Activated CD4-positive, alpha-beta memory T cell treated with anti-CD3 and anti-CD28 coated beads for 36 hours (primary cell): ENCODE measurements at regions of chr1 and their contacts with region 1.

Region 1: DNA sequence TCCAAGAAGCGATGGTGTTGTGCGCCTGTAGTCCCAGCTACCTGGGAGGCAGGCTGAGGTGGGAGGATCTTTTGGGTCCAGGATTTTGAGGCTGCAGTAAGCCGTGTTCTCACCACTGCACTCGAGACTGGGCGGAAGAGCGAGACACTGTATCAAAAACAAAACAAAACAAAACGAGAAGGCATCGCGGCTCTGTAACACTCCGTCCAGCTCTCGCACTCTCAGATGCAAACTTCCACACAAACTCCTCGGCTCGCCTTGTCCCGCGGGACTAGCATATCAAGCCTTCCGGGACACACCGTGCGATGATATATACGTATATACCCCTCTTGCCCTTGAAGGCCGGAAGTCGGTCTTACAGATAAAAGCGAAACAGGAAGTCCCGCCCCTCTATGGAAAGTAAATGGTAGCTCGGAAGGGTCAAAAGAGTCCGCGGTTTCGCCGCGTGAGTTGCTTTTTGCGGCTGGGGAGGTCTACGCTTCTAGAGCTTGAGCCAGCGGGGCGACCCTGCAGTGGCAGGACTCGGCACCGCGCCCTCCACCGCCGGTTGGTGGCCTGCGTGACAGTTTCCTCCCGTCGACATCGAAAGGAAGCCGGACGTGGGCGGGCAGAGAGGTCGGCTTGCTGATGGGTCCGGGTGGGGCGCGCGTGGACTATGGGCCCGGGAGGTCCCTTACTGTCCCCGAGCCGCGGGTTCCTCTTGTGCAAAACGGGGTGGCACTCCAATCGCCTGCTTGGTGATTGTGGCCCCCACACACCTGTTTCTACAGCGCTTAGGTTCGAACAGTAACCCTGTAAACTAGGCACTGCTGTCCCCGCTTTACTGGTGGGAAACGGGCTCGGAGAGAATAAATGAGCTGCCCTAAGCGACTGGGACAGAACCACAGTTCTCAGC is at the start of gene COA6:
- DNase-seq: peak; percentile 92
- H3K4me3 Mint-ChIP-seq: peak within 1 kb of the TSS; percentile 97
- H3K27ac Mint-ChIP-seq: peak within 1 kb of the TSS; percentile 100
- H3K4me1 Mint-ChIP-seq: peaks cover 60% of the 10 kb centered on the region
- H3K27me3 Mint-ChIP-seq: no peaks in the 10 kb centered on the region
- total RNA-seq, gene COA6: 57.7 to 58.5 TPM

Region 2: DNA sequence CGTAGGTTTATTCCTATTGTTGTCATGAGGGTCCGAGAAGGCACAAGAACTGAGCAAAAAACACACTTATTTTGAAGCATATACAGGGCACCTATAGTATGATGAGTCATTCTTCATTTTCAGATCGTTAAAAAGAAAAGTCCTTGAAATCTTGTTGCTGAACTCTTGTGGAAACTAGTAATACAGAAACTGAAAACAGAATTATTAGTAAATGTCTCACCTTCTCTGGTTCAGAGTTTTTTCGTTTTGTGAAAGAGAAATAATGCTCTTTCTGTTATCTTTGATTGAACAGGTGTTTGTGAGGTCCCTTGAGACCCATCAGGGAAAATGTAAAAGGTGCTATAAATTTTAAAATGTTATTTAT is 102.1 kb before region 1 on chr1:
- CTCF ChIA-PET with region 1: interaction called, 3 read pairs
- POLR2A ChIA-PET with region 1: no interaction called
- intact Hi-C with region 1: loop called (anchors 2 kb)
- DNase-seq: no peak
- H3K4me3 Mint-ChIP-seq: no peak overlapping the region
- H3K27ac Mint-ChIP-seq: no peak overlapping the region
- H3K4me1 Mint-ChIP-seq: peaks cover 32% of the 10 kb centered on the region
- H3K27me3 Mint-ChIP-seq: peaks cover 30% of the 10 kb centered on the region

Region 3: DNA sequence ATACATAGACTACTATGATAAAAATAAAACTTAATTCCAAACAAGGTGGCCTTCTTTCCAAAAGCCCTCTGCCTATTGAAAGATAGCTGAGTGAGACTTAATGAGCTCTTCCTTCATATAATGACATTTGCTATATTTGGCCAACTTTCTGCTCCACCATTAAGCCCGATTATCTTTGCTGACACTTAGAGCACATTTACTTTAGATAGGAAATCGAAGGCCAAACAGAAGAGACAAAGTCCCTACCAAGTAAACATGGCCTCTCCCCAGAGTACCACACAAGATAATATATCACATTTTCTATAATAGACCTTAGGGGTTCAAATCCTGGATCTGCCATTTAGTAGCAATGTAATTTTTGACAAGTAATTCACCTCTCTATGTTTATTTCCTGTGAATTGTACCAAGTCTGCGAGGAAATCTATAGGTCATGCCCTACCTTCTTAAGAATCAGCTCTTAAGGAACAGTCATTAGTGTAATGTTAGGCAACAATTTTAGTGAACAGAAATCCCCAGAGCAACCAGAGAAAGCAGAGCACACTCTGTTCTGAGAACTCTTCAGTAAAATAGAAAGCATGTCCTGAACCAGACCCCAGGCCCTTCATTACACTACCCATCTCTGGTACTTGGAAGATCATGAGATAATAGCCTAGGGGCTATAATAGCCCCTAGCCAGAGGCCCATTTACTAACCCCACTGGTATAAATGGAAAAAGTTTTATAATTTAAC is 17.4 kb before region 1 on chr1:
- CTCF ChIA-PET with region 1: no interaction called
- POLR2A ChIA-PET with region 1: interaction called, 6 read pairs
- intact Hi-C with region 1: loop called (anchors 2 kb)
- DNase-seq: no peak
- H3K4me3 Mint-ChIP-seq: peak overlapping the region; percentile 77
- H3K27ac Mint-ChIP-seq: peak overlapping the region; percentile 80
- H3K4me1 Mint-ChIP-seq: peaks cover 15% of the 10 kb centered on the region
- H3K27me3 Mint-ChIP-seq: no peaks in the 10 kb centered on the region

Region 4: GRCh38 chr1:234409328-234409727 is 36.0 kb after region 1 on chr1:
- CTCF ChIA-PET with region 1: interaction called, 13 read pairs
- POLR2A ChIA-PET with region 1: interaction called, 10 read pairs
- intact Hi-C with region 1: loop called (anchors 1 kb)
- DNase-seq: peak; percentile 29
- H3K4me3 Mint-ChIP-seq: peak overlapping the region; percentile 45
- H3K27ac Mint-ChIP-seq: peak overlapping the region; percentile 84
- H3K4me1 Mint-ChIP-seq: peaks cover 32% of the 10 kb centered on the region
- H3K27me3 Mint-ChIP-seq: no peaks in the 10 kb centered on the region

Region 5: DNA sequence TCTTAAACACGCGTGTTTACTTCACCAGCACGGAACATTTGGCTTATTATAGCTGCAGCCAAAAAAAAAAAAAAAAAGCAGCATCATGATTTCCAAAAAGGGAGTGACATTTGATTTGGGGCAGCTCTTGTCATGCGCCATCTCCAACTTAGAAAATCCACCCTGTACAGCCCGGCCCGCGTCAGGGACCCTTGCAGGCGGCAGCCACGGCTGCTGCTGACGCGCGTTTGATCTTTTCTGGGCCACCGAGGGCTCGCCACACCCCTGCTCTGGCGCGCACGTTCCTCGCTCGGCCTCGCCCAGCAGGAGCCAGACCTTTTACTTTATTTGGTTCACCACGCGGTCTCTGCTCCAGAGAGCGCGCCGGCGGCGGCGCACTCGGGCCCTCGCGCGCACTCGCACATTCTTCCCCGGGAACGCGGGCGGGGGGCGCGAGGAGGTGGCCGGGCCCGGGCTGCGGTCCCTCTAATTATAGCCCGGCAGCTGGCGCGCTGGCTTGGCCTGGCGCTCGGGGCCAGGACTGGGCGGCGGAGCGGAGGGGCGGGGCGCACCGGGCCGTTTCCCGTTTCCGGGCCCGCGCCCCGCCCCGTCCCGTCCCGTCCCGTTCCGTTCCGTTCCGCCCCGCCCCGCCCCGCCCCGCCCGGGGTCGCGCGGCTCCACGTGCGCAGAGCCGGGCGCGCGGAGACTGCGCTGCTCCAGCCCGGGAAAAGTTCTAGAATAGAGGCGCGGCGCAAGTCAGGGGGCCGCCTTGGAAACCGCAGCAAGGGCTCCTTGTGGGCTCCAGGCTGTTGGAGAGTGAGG is 226.5 kb after region 1 on chr1:
- CTCF ChIA-PET with region 1: no interaction called
- POLR2A ChIA-PET with region 1: no interaction called
- intact Hi-C with region 1: loop called (anchors 2 kb)
- DNase-seq: peak; percentile 82
- H3K4me3 Mint-ChIP-seq: peak overlapping the region; percentile 85
- H3K27ac Mint-ChIP-seq: peak overlapping the region; percentile 100
- H3K4me1 Mint-ChIP-seq: peaks cover 54% of the 10 kb centered on the region
- H3K27me3 Mint-ChIP-seq: no peaks in the 10 kb centered on the region